ENCODE measurements at regions of chr1 and their contacts with region 1.

Region 1: DNA sequence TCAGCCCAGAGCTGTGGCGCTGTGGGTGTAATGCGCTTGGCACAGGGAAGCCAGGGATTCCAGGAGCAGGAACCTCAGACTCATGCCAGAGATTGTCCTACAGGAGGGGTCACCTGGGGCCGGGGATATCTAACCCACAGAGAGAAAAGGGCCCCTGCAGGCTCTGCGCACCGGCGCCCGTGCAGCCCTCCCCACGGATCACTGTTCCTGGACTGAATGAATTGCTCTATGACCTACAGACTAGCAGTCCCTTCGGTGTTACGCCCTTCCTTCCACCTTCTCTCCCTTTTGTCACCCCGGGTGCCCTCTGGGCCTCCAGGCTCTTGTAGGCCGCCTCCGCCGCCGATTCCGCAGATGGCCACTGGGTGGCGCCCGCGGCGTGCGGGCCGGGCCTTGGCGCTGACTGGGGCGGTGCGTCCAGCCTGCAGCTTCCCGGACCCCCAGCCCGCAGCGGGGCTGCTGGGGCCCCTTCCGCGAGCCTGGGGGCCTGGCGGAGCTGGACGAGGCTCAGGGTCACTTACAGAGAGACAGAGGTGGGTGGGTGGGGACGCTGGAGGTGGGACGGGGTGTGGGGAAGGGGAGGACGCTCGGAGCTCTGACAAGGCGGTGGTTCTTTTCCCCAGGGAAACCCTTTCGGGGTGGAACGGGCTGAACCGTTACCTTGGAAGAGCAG is 101.3 kb downstream of the IER5 start:
- DNase-seq: peak; percentile 61 to 91 (median 76)
- ATAC-seq: peak; percentile 94
- H3K4me3 ChIP-seq: peak overlapping the region in 1 of 2 experiments; percentile 24
- H3K4me3 Mint-ChIP-seq: peak overlapping the region; percentile 42
- H3K27ac ChIP-seq: no peak overlapping the region
- H3K27ac Mint-ChIP-seq: no peak overlapping the region
- H3K4me1 ChIP-seq: peaks cover 11% of the 10 kb centered on the region
- H3K4me1 Mint-ChIP-seq: peaks cover 8% of the 10 kb centered on the region
- H3K27me3 ChIP-seq: no peaks in the 10 kb centered on the region
- H3K27me3 Mint-ChIP-seq: peaks cover 19% of the 10 kb centered on the region
- CTCF ChIP-seq: peak; percentile 94

Region 2: DNA sequence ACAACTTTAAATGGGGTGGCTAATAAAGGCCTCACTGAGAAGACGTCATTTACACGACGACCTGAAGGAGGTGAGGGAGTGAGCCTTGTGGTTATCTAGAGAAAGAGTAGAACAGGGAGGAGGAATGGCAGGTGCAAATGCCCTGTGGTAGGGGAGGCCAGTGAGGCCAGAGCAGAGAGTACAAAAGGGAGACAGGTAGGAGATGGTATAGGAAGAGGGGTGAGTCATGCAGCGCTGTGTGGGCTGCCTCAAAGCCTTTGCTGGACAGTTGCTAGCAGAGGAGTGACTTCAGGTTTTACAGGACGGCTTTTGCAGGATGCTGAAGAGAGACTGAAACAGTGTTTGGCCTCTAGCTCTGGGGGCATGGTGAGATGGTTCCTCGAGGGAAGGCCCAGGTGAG is 14.7 kb after region 1 on chr1:
- CTCF ChIA-PET with region 1: interaction called, 20 read pairs
- POLR2A ChIA-PET with region 1: no interaction called
- intact Hi-C with region 1: no loop called
- DNase-seq: no peak
- ATAC-seq: no peak
- H3K4me3 ChIP-seq: no peak overlapping the region
- H3K4me3 Mint-ChIP-seq: no peak overlapping the region
- H3K27ac ChIP-seq: no peak overlapping the region
- H3K27ac Mint-ChIP-seq: no peak overlapping the region
- H3K4me1 ChIP-seq: no peaks in the 10 kb centered on the region
- H3K4me1 Mint-ChIP-seq: no peaks in the 10 kb centered on the region
- H3K27me3 ChIP-seq: no peaks in the 10 kb centered on the region
- H3K27me3 Mint-ChIP-seq: no peaks in the 10 kb centered on the region
- CTCF ChIP-seq: no peak

Region 3: GRCh38 chr1:181239086-181239485 is 49.3 kb after region 1 on chr1:
- CTCF ChIA-PET with region 1: no interaction called
- POLR2A ChIA-PET with region 1: no interaction called
- intact Hi-C with region 1: no loop called
- DNase-seq: no peak
- ATAC-seq: no peak
- H3K4me3 ChIP-seq: no peak overlapping the region
- H3K4me3 Mint-ChIP-seq: no peak overlapping the region
- H3K27ac ChIP-seq: no peak overlapping the region
- H3K27ac Mint-ChIP-seq: no peak overlapping the region
- H3K4me1 ChIP-seq: no peaks in the 10 kb centered on the region
- H3K4me1 Mint-ChIP-seq: no peaks in the 10 kb centered on the region
- H3K27me3 ChIP-seq: no peaks in the 10 kb centered on the region
- H3K27me3 Mint-ChIP-seq: no peaks in the 10 kb centered on the region
- CTCF ChIP-seq: no peak

Region 4: DNA sequence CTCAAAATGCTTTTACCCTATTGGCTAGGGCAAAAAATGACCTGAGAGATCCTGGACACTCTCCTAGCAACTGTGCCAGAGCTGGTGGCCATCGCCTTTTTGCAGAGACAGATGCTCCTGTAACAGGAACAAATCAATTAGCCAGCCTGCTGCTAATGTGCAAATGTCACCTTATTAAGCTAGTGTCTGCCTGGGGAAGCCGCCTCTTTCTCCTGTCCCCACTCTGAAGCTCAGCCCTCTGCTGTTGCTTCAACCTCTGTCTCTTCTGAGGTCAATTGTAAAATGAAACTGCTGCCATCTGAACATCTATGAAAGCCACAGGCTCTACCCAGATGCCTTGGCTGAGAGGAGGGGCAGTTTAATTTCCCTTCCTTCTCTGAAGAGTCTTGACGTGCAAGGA is 208.0 kb after region 1 on chr1:
- CTCF ChIA-PET with region 1: interaction called, 44 read pairs
- POLR2A ChIA-PET with region 1: no interaction called
- intact Hi-C with region 1: loop called in 1 of 2 experiments (anchors 1 kb)
- DNase-seq: peak in 6 of 9 experiments; percentile 11 to 67 (median 40)
- ATAC-seq: peak; percentile 19
- H3K4me3 ChIP-seq: peak overlapping the region in 1 of 2 experiments; percentile 14
- H3K4me3 Mint-ChIP-seq: peak overlapping the region; percentile 63
- H3K27ac ChIP-seq: peak overlapping the region; percentile 36 to 52
- H3K27ac Mint-ChIP-seq: no peak overlapping the region
- H3K4me1 ChIP-seq: peaks cover 83% of the 10 kb centered on the region
- H3K4me1 Mint-ChIP-seq: peaks cover 38% of the 10 kb centered on the region
- H3K27me3 ChIP-seq: no peaks in the 10 kb centered on the region
- H3K27me3 Mint-ChIP-seq: no peaks in the 10 kb centered on the region
- CTCF ChIP-seq: no peak

Region 5: GRCh38 chr1:181424786-181425403 is 235.1 kb after region 1 on chr1:
- CTCF ChIA-PET with region 1: interaction called, 108 read pairs
- POLR2A ChIA-PET with region 1: interaction called, 8 read pairs
- intact Hi-C with region 1: loop called (anchors 1 kb)
- DNase-seq: peak; percentile 59 to 88 (median 75)
- ATAC-seq: peak; percentile 73
- H3K4me3 ChIP-seq: no peak overlapping the region
- H3K4me3 Mint-ChIP-seq: peak overlapping the region; percentile 75
- H3K27ac ChIP-seq: no peak overlapping the region
- H3K27ac Mint-ChIP-seq: no peak overlapping the region
- H3K4me1 ChIP-seq: no peaks in the 10 kb centered on the region
- H3K4me1 Mint-ChIP-seq: peaks cover 4% of the 10 kb centered on the region
- H3K27me3 ChIP-seq: peaks cover 0 to 4% of the 10 kb centered on the region in 2 experiments
- H3K27me3 Mint-ChIP-seq: peaks cover 19% of the 10 kb centered on the region
- CTCF ChIP-seq: peak; percentile 99

Region 6: DNA sequence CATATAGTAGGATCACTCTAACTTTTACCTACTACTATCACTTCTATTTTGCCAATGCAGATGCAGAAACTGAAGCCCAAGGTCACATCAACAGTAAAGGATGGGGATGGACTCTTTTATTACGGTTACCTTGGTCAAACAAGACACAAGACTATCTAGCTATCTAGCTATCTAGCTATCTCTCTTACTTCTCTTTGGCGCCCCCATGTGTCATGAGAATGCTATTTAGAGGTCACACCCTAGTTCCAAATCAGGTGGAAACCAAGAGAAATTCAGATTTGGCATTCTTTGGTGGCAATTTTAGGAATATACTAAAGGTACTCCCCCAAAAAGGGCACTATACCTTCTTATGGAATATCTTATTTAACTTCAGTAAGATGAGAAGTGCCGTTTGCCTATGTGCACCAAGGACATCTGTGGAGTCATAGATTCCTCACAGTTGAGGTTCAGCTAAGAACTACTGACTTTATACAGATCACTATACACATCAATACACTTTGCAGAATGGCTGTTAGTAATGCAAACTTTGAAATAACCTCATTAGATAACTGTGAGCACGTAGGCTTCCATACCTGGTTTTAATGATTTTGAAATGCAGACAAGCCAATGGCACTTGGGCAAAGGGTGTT is 865.0 kb after region 1 on chr1:
- CTCF ChIA-PET with region 1: interaction called, 5 read pairs
- POLR2A ChIA-PET with region 1: no interaction called
- intact Hi-C with region 1: loop called in 1 of 2 experiments (anchors 2 kb)
- DNase-seq: peak; percentile 13 to 68 (median 60)
- ATAC-seq: no peak
- H3K4me3 ChIP-seq: no peak overlapping the region
- H3K4me3 Mint-ChIP-seq: no peak overlapping the region
- H3K27ac ChIP-seq: no peak overlapping the region
- H3K27ac Mint-ChIP-seq: no peak overlapping the region
- H3K4me1 ChIP-seq: no peaks in the 10 kb centered on the region
- H3K4me1 Mint-ChIP-seq: no peaks in the 10 kb centered on the region
- H3K27me3 ChIP-seq: no peaks in the 10 kb centered on the region
- H3K27me3 Mint-ChIP-seq: peaks cover 19% of the 10 kb centered on the region
- CTCF ChIP-seq: peak; percentile 63